Ascending aorta (tissue), 2 donors: ENCODE measurements at regions of chr4 and their contacts with region 1.

Region 1: GRCh38 chr4:41177016-41177415 is 37.3 kb downstream of the APBB2 start:
- DNase-seq: no peak
- H3K4me3 ChIP-seq: no peak overlapping the region
- H3K27ac ChIP-seq: peak overlapping the region in 1 of 2 donors; percentile 63
- H3K4me1 ChIP-seq: peaks cover 10 to 37% of the 10 kb centered on the region in 2 donors
- H3K27me3 ChIP-seq: no peaks in the 10 kb centered on the region
- CTCF ChIP-seq: peak in 1 of 3 experiments; percentile 13

Region 2: DNA sequence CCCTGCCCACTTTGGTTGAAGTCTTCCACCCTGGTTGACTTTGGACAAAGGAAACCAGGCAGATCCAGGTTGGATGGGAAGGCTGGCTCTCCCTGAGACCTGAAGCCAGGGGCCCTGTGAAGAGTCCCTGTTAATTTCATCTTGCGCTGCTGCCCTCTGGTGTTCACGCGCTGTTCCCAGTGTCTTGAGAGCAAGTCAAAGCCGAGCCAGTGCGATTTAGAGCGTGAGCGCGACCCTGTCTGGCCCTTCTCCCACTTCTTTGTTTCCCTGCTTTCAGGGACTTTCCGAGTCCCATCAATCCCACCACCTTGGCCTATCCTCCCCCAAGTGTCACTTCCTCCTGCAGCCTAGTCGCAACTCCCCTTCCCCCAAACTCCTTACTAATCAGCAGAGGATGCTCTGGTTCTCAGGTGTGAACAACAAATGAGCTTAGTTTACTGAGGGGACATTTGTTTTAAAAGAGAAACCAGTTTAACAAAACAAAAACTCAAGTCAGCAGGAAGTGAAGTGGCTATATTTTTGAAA is 867.7 kb before region 1 on chr4:
- intact Hi-C with region 1: no loop called
- DNase-seq: peak; percentile 59 to 93
- H3K4me3 ChIP-seq: peak overlapping the region in 1 of 2 donors; percentile 23
- H3K27ac ChIP-seq: no peak overlapping the region
- H3K4me1 ChIP-seq: no peaks in the 10 kb centered on the region
- H3K27me3 ChIP-seq: no peaks in the 10 kb centered on the region
- CTCF ChIP-seq: peak; percentile 58 to 87 (median 79)

Region 3: GRCh38 chr4:40648742-40649281 is 528.2 kb before region 1 on chr4:
- intact Hi-C with region 1: no loop called
- DNase-seq: peak in 1 of 2 donors; percentile 64
- H3K4me3 ChIP-seq: no peak overlapping the region
- H3K27ac ChIP-seq: no peak overlapping the region
- H3K4me1 ChIP-seq: no peaks in the 10 kb centered on the region
- H3K27me3 ChIP-seq: no peaks in the 10 kb centered on the region
- CTCF ChIP-seq: no peak

Region 4: GRCh38 chr4:41143311-41144039 is 33.5 kb before region 1 on chr4:
- intact Hi-C with region 1: loop called (anchors 5 kb)
- DNase-seq: peak in 1 of 2 donors; percentile 81
- H3K4me3 ChIP-seq: peak overlapping the region; percentile 24 to 45
- H3K27ac ChIP-seq: peak overlapping the region; percentile 80 to 92
- H3K4me1 ChIP-seq: peaks cover 27 to 60% of the 10 kb centered on the region in 2 donors
- H3K27me3 ChIP-seq: no peaks in the 10 kb centered on the region
- CTCF ChIP-seq: no peak

Region 5: GRCh38 chr4:41160012-41160789 is 16.8 kb before region 1 on chr4:
- intact Hi-C with region 1: loop called (anchors 2 kb)
- DNase-seq: no peak
- H3K4me3 ChIP-seq: no peak overlapping the region
- H3K27ac ChIP-seq: no peak overlapping the region
- H3K4me1 ChIP-seq: peaks cover 0 to 21% of the 10 kb centered on the region in 2 donors
- H3K27me3 ChIP-seq: no peaks in the 10 kb centered on the region
- CTCF ChIP-seq: no peak

Region 6: GRCh38 chr4:41219401-41220192 is 42.6 kb after region 1 on chr4:
- intact Hi-C with region 1: no loop called
- DNase-seq: no peak
- H3K4me3 ChIP-seq: no peak overlapping the region
- H3K27ac ChIP-seq: no peak overlapping the region
- H3K4me1 ChIP-seq: peaks cover 6 to 8% of the 10 kb centered on the region in 2 donors
- H3K27me3 ChIP-seq: no peaks in the 10 kb centered on the region
- CTCF ChIP-seq: no peak

Region 7: GRCh38 chr4:41579526-41579925 is 402.5 kb after region 1 on chr4:
- intact Hi-C with region 1: no loop called
- DNase-seq: no peak
- H3K4me3 ChIP-seq: no peak overlapping the region
- H3K27ac ChIP-seq: no peak overlapping the region
- H3K4me1 ChIP-seq: peaks cover 0 to 14% of the 10 kb centered on the region in 2 donors
- H3K27me3 ChIP-seq: no peaks in the 10 kb centered on the region
- CTCF ChIP-seq: no peak